ENCODE measurements at regions of chr18 and their contacts with region 1.

Region 1: GRCh38 chr18:449374-449773 is 51.1 kb downstream of the COLEC12 start:
- DNase-seq: peak in 2 of 5 donors; percentile 31 to 36
- ATAC-seq: peak in 3 of 4 donors; percentile 27 to 66 (median 65)
- H3K4me3 ChIP-seq: no peak overlapping the region
- H3K27ac ChIP-seq: peak overlapping the region in 3 of 12 donors; percentile 15 to 24 (median 22)
- H3K4me1 ChIP-seq: peaks cover 0 to 39% (median 1%) of the 10 kb centered on the region in 12 donors
- H3K27me3 ChIP-seq: no peaks in the 10 kb centered on the region
- CTCF ChIP-seq: no peak
- POLR2A ChIP-seq: no peak

Region 2: GRCh38 chr18:323253-323622 is 126.1 kb before region 1 on chr18:
- intact Hi-C with region 1: loop called in 1 of 10 experiments (anchors 10 kb)
- DNase-seq: no peak
- ATAC-seq: peak; percentile 47 to 74 (median 64)
- H3K4me3 ChIP-seq: no peak overlapping the region
- H3K27ac ChIP-seq: peak overlapping the region in 4 of 12 donors; percentile 7 to 68 (median 32)
- H3K4me1 ChIP-seq: peaks cover 0 to 20% (median 7%) of the 10 kb centered on the region in 12 donors
- H3K27me3 ChIP-seq: no peaks in the 10 kb centered on the region
- CTCF ChIP-seq: no peak
- POLR2A ChIP-seq: no peak